ENCODE measurements at regions of chr14 and their contacts with region 1.

Region 1: GRCh38 chr14:64636208-64636979 is 67.8 kb upstream of the PLEKHG3 start:
- DNase-seq: peak; percentile 82
- ATAC-seq: peak; percentile 87
- H3K4me3 Mint-ChIP-seq: no peak overlapping the region
- H3K27ac Mint-ChIP-seq: no peak overlapping the region
- H3K4me1 Mint-ChIP-seq: peaks cover 24% of the 10 kb centered on the region
- H3K27me3 Mint-ChIP-seq: no peaks in the 10 kb centered on the region
- CTCF ChIP-seq: peak; percentile 82

Region 2: GRCh38 chr14:64503478-64504309 is 132.7 kb before region 1 on chr14 and contains the start of gene ZBTB25:
- CTCF ChIA-PET with region 1: interaction called, 12 read pairs
- POLR2A ChIA-PET with region 1: interaction called, 10 read pairs
- DNase-seq: peak; percentile 87
- ATAC-seq: peak; percentile 70
- H3K4me3 Mint-ChIP-seq: peak within 1 kb of the TSS; percentile 81
- H3K27ac Mint-ChIP-seq: peak within 1 kb of the TSS; percentile 99
- H3K4me1 Mint-ChIP-seq: peaks cover 50% of the 10 kb centered on the region
- H3K27me3 Mint-ChIP-seq: no peaks in the 10 kb centered on the region
- CTCF ChIP-seq: no peak
- total RNA-seq, gene ZBTB25: 11.9 to 14.0 TPM (median 13.1 TPM) in 3 replicates

Region 3: DNA sequence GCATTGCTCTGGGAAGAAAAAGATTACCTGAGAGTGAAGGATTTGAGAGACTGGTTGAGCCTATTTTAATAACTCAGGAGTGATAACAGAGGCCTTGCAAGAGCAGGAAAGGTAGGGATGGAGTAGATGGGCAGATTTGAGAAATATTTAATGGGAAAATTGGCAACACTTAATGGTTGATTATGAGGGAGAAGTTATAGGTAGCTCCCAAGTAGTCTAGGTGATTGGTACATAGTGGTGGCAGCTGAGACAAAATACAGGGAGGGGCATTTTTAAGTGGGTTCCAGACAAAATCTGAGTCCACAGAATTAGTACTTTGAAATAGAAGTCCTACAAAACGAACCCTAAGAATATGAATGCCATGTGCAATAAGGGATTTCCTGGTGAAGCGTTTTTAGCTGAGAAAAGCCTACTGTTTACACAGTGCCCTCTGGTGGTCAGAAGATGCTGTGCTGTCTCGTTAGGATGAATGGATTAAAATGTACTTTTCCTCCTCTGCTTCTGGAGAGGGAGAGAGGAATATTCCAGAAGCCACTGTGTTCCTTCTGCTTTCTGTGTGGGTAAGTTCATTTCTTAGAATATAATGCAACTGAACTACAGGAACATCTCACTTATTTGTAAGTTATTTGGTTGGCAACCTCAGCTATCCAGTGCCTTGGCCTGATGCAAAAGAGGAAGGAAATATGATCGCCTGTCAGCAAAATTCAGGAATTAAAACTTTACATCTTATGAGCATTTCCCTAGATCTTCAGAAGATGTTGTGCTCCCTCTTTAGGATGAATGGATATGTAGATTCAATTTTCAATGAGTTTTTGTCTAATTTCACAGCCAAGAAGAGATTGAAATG is 125.3 kb before region 1 on chr14:
- CTCF ChIA-PET with region 1: interaction called, 17 read pairs
- POLR2A ChIA-PET with region 1: no interaction called
- DNase-seq: peak; percentile 63
- ATAC-seq: peak; percentile 51; the same call in 1 of the 2 replicates
- H3K4me3 Mint-ChIP-seq: no peak overlapping the region
- H3K27ac Mint-ChIP-seq: peak overlapping the region; percentile 77
- H3K4me1 Mint-ChIP-seq: peaks cover 49% of the 10 kb centered on the region
- H3K27me3 Mint-ChIP-seq: no peaks in the 10 kb centered on the region
- CTCF ChIP-seq: peak; percentile 73

Region 4: GRCh38 chr14:64540208-64541157 is 95.9 kb before region 1 on chr14 and contains the start of gene HSPA2:
- CTCF ChIA-PET with region 1: interaction called, 19 read pairs
- POLR2A ChIA-PET with region 1: no interaction called
- DNase-seq: peak; percentile 99
- ATAC-seq: peak; percentile 93
- H3K4me3 Mint-ChIP-seq: peak within 1 kb of the TSS; percentile 94
- H3K27ac Mint-ChIP-seq: peak within 1 kb of the TSS; percentile 100
- H3K4me1 Mint-ChIP-seq: peaks cover 38% of the 10 kb centered on the region
- H3K27me3 Mint-ChIP-seq: peaks cover 20% of the 10 kb centered on the region
- CTCF ChIP-seq: no peak
- total RNA-seq, gene HSPA2: 30.2 to 43.9 TPM (median 40.7 TPM) in 3 replicates

Region 5: DNA sequence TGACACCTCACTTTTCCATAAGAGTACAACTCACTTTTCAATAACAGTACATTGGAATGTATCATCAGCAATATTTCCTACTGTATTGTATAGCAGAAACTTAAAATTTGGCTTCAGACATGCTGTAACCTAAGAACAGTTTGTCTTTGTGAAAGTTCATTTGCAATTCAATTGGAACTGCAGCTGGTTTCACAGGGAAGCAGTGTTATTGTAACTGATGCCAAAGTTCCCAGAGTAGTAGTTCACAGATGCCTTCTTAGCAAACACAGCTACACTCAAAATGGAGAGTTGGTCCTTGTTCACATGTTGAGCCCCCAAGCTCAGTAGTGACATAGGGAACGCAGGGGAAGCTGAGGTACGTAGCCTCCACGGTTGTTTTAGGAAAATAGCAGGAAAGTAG is 63.3 kb before region 1 on chr14:
- CTCF ChIA-PET with region 1: interaction called, 22 read pairs
- POLR2A ChIA-PET with region 1: no interaction called
- DNase-seq: no peak
- ATAC-seq: peak; percentile 81
- H3K4me3 Mint-ChIP-seq: peak overlapping the region; percentile 31; the same call in 1 of the 2 replicates
- H3K27ac Mint-ChIP-seq: peak overlapping the region; percentile 98
- H3K4me1 Mint-ChIP-seq: peaks cover 24% of the 10 kb centered on the region
- H3K27me3 Mint-ChIP-seq: no peaks in the 10 kb centered on the region
- CTCF ChIP-seq: no peak

Region 6: DNA sequence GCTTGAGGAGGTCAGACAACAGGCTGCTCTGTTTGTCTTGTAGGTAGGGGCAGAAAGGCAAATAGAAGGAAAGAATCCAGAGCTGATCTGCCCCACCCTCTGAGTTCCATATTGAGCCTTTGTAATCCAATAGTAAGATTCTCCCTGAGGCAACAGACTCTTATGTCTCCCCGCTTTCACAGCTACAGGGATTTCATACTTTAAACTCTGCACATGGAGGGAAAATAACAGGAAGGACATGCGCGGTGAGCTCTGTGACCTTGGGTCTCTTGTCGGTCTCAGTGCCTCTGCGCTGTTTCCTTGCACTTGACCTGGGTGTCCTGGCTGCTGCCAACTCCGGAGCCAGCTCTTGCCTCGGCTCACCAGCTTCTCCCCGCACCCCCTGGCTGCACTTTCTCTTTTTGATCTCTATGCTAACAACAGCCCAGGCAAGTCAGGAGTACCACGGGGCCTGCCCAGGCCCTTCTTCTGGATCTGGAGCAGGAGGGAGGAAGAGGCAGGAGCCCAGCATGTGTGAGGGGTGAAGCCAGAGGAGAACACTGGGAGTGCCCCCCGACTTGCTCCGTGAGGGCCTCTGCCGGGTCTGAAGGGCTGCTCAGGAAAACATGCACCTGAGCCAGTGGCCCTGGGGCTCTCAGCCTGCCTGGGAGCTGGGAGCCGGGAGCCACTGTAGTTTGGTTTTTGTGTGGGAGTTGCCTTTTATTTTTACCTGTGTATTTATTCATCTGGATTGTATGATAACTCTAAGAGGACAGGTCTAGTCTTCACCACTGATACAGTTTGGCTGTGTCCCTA is 10.7 kb before region 1 on chr14:
- CTCF ChIA-PET with region 1: interaction called, 27 read pairs
- POLR2A ChIA-PET with region 1: no interaction called
- DNase-seq: no peak
- ATAC-seq: peak; percentile 51
- H3K4me3 Mint-ChIP-seq: no peak overlapping the region
- H3K27ac Mint-ChIP-seq: no peak overlapping the region
- H3K4me1 Mint-ChIP-seq: peaks cover 18% of the 10 kb centered on the region
- H3K27me3 Mint-ChIP-seq: no peaks in the 10 kb centered on the region
- CTCF ChIP-seq: no peak

Measured in WTC11 (cell line).